ENCODE measurements at regions of chr6 and their contacts with region 1.

Region 1: DNA sequence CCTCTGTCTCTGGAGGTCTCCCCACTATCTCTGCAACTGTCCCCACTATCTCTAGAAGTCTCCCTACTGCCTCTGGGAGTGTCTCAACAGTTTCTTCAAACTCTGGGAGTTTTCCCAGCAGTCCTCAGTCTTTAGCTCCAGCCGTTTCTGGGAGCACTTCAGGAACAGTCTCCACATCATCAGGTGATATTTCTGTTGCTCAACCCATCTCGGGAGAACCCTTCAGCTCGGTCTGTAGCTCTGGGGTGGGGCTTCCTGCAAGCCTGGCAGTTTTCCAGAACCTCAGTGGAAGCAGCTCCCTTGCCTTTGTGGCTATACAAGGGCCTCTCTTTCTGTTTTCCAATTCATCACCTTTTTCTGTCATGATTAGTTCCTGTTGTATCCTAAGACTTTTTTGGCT is 3.0 kb upstream of the SFTA2 start:
- DNase-seq: no peak
- ATAC-seq: no peak
- H3K4me3 ChIP-seq: no peak overlapping the region
- H3K27ac ChIP-seq: no peak overlapping the region
- H3K4me1 ChIP-seq: peaks cover 7% of the 10 kb centered on the region
- H3K27me3 ChIP-seq: no peaks in the 10 kb centered on the region
- CTCF ChIP-seq: no peak

Region 2: GRCh38 chr6:29981211-29981812 is 953.7 kb before region 1 on chr6:
- CTCF ChIA-PET with region 1: no interaction called
- POLR2A ChIA-PET with region 1: no interaction called
- intact Hi-C with region 1: no loop called
- DNase-seq: no peak
- ATAC-seq: no peak
- H3K4me3 ChIP-seq: no peak overlapping the region
- H3K27ac ChIP-seq: no peak overlapping the region
- H3K4me1 ChIP-seq: peaks cover 9% of the 10 kb centered on the region
- H3K27me3 ChIP-seq: no peaks in the 10 kb centered on the region
- CTCF ChIP-seq: no peak

Region 3: DNA sequence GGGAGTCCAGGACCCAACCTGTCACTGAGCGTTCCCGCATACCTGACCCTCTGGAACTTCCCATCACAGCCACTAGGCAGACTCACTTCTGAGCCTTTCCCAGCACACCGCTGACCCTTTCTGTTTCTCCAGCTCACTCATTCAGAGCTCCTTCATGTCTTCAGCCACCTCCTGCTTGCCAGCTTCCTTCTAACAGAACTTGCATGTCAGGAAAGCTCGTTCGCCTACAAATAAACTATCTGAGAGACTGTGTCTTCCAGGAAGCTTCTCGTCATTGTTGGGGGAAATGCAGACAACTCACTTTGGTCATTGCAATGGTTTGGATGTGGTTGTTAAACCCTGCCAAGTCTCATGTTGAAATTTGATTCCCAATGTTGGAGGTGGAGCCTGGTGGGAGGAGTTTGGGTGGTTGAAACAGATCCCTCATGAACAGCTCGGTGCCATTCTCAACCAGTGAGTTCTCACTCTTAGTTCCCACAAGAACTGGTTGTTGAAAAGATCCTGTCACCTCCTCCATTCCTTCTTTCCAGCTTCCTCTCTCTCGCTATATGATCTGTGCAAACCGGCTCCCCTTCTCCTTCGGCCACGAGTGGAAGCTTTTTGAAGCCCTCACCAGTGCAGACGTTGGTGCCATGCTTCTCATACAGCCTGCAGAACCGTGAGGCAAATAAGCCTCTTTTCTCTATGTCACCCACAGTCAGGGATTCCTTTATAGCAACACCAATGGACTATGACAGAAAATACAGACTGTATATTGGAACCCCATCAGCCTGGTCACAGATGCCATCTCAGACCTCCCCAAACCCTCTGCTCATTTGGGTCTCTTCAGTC is 47.1 kb after region 1 on chr6:
- CTCF ChIA-PET with region 1: no interaction called
- POLR2A ChIA-PET with region 1: no interaction called
- intact Hi-C with region 1: loop called (anchors 10 kb)
- DNase-seq: peak; percentile 58
- ATAC-seq: peak; percentile 70
- H3K4me3 ChIP-seq: no peak overlapping the region; the same call in 1 of the 2 replicates
- H3K27ac ChIP-seq: no peak overlapping the region
- H3K4me1 ChIP-seq: 0 out of 2 replicates have a peak, but pooled peaks cover 3% of the 10 kb centered on the region
- H3K27me3 ChIP-seq: no peaks in the 10 kb centered on the region
- CTCF ChIP-seq: 0 out of 2 replicates have a peak, but pooled peaks have one; percentile 29

Measured in PC-3 (cell line).